ENCODE measurements at regions of chr17 and their contacts with region 1.

Region 1: DNA sequence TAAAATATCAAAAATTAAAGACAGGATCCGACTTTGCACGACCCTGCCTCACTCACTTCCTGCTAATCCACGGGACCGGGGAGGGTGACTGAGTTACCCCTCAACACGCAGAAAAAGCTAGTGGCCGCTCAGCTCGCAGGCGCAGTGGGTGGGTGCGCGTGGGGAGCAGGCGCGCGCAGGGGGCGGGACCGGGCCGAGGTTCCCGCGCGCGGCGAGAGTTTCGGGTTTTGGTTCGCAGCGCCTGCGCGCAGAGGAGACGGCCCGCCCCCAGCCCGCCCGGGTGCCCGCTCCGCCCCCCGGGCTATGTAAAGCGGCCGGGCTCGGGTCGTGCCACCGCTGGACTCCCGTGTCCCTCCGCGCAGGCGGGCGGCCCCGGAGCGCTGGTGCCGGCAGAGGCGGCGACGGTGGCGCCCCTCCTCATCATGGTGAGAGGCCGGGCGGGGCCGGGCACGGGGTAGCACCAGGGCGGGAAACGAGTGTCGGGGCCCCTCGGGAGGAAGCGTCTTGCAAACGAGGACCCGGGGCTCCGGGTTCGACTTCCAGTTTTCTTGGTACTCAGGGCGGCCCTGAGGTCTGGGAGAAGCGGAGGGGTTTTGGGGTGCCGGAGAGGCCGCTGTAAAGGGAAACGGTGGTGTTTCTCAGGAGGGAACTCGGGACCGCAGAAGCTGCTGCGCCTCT is at the start of gene CNP:
- DNase-seq: peak; percentile 93
- ATAC-seq: peak; percentile 83
- H3K4me3 Mint-ChIP-seq: peak within 1 kb of the TSS; percentile 83
- H3K27ac Mint-ChIP-seq: peak within 1 kb of the TSS; percentile 83
- H3K4me1 Mint-ChIP-seq: peaks cover 47% of the 10 kb centered on the region
- H3K27me3 Mint-ChIP-seq: no peaks in the 10 kb centered on the region
- total RNA-seq, gene CNP: 93.4 to 94.6 TPM

Region 2: GRCh38 chr17:41754066-41754465 is 212.5 kb before region 1 on chr17:
- CTCF ChIA-PET with region 1: no interaction called
- POLR2A ChIA-PET with region 1: no interaction called
- DNase-seq: no peak
- ATAC-seq: no peak
- H3K4me3 Mint-ChIP-seq: no peak overlapping the region
- H3K27ac Mint-ChIP-seq: no peak overlapping the region
- H3K4me1 Mint-ChIP-seq: no peaks in the 10 kb centered on the region
- H3K27me3 Mint-ChIP-seq: peaks cover 3% of the 10 kb centered on the region

Region 3: DNA sequence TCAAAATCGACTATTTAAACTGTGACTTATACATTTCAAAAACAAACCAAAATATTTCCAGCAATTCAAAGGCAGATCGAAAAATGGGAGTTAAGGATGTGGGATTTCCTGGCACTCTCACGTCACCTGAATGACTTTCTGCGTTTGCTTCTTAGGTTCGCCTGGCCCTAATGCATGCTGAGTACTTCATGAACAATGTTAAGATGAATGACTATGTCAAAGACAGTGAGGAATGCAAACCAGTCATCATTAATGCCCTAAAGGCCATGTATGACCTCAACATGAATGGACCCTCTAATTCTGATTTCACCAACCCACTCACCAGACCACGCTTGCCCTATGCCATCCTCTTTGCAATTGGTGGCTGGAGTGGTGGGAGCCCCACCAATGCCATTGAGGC is 121.6 kb before region 1 on chr17:
- CTCF ChIA-PET with region 1: no interaction called
- POLR2A ChIA-PET with region 1: no interaction called
- DNase-seq: no peak
- ATAC-seq: no peak
- H3K4me3 Mint-ChIP-seq: no peak overlapping the region
- H3K27ac Mint-ChIP-seq: no peak overlapping the region
- H3K4me1 Mint-ChIP-seq: no peaks in the 10 kb centered on the region
- H3K27me3 Mint-ChIP-seq: no peaks in the 10 kb centered on the region

Region 4: GRCh38 chr17:41909088-41909487 is 57.5 kb before region 1 on chr17:
- CTCF ChIA-PET with region 1: no interaction called
- POLR2A ChIA-PET with region 1: no interaction called
- DNase-seq: no peak
- ATAC-seq: no peak
- H3K4me3 Mint-ChIP-seq: no peak overlapping the region
- H3K27ac Mint-ChIP-seq: no peak overlapping the region
- H3K4me1 Mint-ChIP-seq: peaks cover 6% of the 10 kb centered on the region
- H3K27me3 Mint-ChIP-seq: no peaks in the 10 kb centered on the region

Region 5: DNA sequence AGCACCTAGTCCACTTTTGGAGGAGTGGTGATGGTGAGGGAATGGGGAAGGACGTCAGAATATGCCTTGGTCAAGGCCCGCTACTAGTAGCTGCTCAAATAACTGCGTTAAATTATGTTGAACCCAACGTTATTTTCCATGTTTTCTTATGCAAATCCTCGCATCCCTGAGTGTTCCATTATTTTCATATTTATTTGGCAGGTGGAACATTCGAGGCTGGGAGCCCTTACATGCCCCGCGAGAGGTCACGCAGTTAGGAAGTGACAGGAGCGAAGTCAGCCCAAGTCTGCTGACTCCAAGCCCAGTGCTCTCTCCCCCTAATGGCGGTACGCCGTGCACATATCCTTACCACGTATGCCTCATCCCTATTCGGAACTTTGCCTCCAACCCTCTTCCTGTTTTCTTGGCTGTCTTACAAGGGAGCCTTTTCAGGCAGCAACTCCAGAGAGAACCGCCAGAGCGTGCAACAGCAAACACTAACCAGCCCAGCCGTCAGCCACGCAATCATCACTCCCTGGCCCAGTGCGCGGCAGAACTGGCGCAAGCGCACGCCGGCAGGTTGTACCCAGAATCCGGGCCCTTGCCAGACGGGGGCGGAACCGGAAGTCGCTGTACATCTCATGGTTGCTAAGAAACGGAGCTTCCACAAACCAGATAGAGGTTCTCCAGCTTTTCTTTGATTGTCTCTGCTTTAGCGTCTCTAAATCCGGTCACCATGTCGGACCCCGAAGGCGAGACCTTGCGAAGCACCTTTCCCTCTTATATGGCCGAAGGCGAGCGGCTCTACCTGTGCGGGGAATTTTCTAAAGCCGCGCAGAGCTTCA is 36.4 kb before region 1 on chr17 and contains the start of gene ODAD4:
- CTCF ChIA-PET with region 1: interaction called, 22 read pairs
- POLR2A ChIA-PET with region 1: interaction called, 13 read pairs
- DNase-seq: peak; percentile 98
- ATAC-seq: peak; percentile 99
- H3K4me3 Mint-ChIP-seq: peak within 1 kb of the TSS; percentile 96
- H3K27ac Mint-ChIP-seq: peak within 1 kb of the TSS; percentile 96
- H3K4me1 Mint-ChIP-seq: peaks cover 55% of the 10 kb centered on the region
- H3K27me3 Mint-ChIP-seq: no peaks in the 10 kb centered on the region
- total RNA-seq, gene ODAD4: 0.89 to 0.97 TPM

Region 6: GRCh38 chr17:41987642-41988041 is 21.0 kb after region 1 on chr17:
- CTCF ChIA-PET with region 1: interaction called, 10 read pairs
- POLR2A ChIA-PET with region 1: interaction called, 8 read pairs
- DNase-seq: no peak
- ATAC-seq: no peak
- H3K4me3 Mint-ChIP-seq: no peak overlapping the region
- H3K27ac Mint-ChIP-seq: no peak overlapping the region
- H3K4me1 Mint-ChIP-seq: no peaks in the 10 kb centered on the region
- H3K27me3 Mint-ChIP-seq: no peaks in the 10 kb centered on the region

Region 7: GRCh38 chr17:42005166-42005565 is 38.6 kb after region 1 on chr17:
- CTCF ChIA-PET with region 1: interaction called, 10 read pairs
- POLR2A ChIA-PET with region 1: no interaction called
- DNase-seq: no peak
- ATAC-seq: no peak
- H3K4me3 Mint-ChIP-seq: no peak overlapping the region
- H3K27ac Mint-ChIP-seq: no peak overlapping the region
- H3K4me1 Mint-ChIP-seq: peaks cover 17% of the 10 kb centered on the region
- H3K27me3 Mint-ChIP-seq: no peaks in the 10 kb centered on the region

Region 8: DNA sequence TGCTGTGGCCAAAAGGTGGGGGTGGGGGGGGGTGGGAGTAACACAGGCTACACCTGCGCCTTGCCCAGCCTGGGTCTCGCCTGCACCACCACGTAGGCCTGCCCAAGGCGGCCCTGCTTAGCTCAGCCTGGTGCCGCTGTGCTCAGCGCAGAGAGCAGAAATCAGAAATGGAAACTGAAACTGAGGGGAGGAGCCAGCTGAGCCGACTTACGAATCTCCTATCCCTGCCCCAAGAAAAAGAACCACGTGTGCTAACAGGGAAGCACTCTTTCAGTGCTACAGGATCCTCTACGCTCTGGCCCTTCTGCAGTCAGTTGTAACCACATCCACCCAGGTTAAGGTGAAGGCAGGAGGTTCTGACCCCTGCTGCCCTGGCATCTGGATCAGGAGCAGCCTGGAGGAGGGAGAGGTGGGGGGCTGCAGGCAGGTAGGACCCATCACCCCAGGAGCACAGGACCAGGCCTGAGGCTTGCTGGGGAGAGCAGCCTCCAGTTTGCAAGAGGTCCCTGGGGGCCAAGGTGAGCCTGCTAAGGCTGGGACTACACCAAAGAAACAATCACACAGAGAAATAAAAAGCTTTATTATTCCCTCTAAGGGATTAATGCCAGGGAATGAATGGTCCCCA is 146.1 kb after region 1 on chr17 and contains the start of gene DHX58:
- CTCF ChIA-PET with region 1: interaction called, 13 read pairs
- POLR2A ChIA-PET with region 1: interaction called, 41 read pairs
- DNase-seq: peak; percentile 92
- ATAC-seq: peak; percentile 89
- H3K4me3 Mint-ChIP-seq: peak within 1 kb of the TSS; percentile 90
- H3K27ac Mint-ChIP-seq: peak within 1 kb of the TSS; percentile 98
- H3K4me1 Mint-ChIP-seq: peaks cover 68% of the 10 kb centered on the region
- H3K27me3 Mint-ChIP-seq: no peaks in the 10 kb centered on the region
- total RNA-seq, gene DHX58: 71.9 to 72.9 TPM

Region 9: GRCh38 chr17:42120770-42121769 is 154.5 kb after region 1 on chr17 and contains the start of gene KAT2A:
- CTCF ChIA-PET with region 1: interaction called, 11 read pairs
- POLR2A ChIA-PET with region 1: interaction called, 41 read pairs
- DNase-seq: peak; percentile 83
- ATAC-seq: peak; percentile 92
- H3K4me3 Mint-ChIP-seq: peak within 1 kb of the TSS; percentile 73
- H3K27ac Mint-ChIP-seq: peak within 1 kb of the TSS; percentile 54
- H3K4me1 Mint-ChIP-seq: peaks cover 33% of the 10 kb centered on the region
- H3K27me3 Mint-ChIP-seq: no peaks in the 10 kb centered on the region
- total RNA-seq, gene KAT2A: 45.2 to 46.8 TPM